GM12878 (cell line): ENCODE measurements at regions of chr4 and their contacts with region 1.

Region 1: GRCh38 chr4:153497988-153498967 is 32.1 kb downstream of the TMEM131L start:
- DNase-seq: peak; percentile 72
- ATAC-seq: peak; percentile 69
- H3K4me3 ChIP-seq: peak overlapping the region; percentile 51
- H3K27ac ChIP-seq: peak overlapping the region; percentile 58
- H3K4me1 ChIP-seq: peaks cover 53% of the 10 kb centered on the region
- H3K27me3 ChIP-seq: no peaks in the 10 kb centered on the region
- CTCF ChIP-seq: no peak
- EP300 ChIP-seq: peak; percentile 23 to 38; a peak in 1 of 4 replicates
- POLR2A ChIP-seq: no peak
- RAD21 ChIP-seq: no peak

Region 2: DNA sequence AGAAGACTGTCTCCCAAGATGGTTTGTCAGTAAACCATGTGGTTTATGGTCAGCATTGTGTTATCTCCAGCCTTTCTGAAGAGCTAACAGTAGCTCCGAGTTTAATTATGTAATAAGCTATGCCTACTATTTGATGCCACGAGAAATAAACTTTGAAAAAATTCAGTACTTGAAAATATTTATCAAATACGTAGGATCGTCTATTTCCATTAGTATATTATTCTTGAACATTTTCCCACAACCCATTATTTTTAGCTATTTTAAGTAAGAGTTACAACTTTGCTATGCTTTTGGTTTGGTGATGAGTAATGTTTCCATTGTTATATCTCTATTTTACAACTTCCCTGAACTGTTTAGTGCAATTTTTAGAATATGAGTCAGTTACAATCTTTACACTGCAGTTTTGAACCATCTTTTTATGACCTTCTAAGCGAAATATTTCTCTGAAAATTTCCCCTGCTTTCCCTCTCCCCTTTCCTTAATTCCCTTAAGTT is 338.5 kb before region 1 on chr4:
- CTCF ChIA-PET with region 1: no interaction called
- POLR2A ChIA-PET with region 1: no interaction called
- RAD21 ChIA-PET with region 1: no interaction called
- SMC1A ChIA-PET with region 1: no interaction called
- in situ Hi-C with region 1: no loop called
- intact Hi-C with region 1: no loop called
- DNase-seq: no peak
- ATAC-seq: 0 out of 3 replicates have a peak, but pooled peaks have one; percentile 23
- H3K4me3 ChIP-seq: no peak overlapping the region
- H3K27ac ChIP-seq: no peak overlapping the region
- H3K4me1 ChIP-seq: peaks cover 12% of the 10 kb centered on the region
- H3K27me3 ChIP-seq: peaks cover 0 to 3% of the 10 kb centered on the region in 2 experiments; a peak in 2 of 4 replicates
- CTCF ChIP-seq: no peak
- EP300 ChIP-seq: no peak
- POLR2A ChIP-seq: no peak
- RAD21 ChIP-seq: no peak

Region 3: DNA sequence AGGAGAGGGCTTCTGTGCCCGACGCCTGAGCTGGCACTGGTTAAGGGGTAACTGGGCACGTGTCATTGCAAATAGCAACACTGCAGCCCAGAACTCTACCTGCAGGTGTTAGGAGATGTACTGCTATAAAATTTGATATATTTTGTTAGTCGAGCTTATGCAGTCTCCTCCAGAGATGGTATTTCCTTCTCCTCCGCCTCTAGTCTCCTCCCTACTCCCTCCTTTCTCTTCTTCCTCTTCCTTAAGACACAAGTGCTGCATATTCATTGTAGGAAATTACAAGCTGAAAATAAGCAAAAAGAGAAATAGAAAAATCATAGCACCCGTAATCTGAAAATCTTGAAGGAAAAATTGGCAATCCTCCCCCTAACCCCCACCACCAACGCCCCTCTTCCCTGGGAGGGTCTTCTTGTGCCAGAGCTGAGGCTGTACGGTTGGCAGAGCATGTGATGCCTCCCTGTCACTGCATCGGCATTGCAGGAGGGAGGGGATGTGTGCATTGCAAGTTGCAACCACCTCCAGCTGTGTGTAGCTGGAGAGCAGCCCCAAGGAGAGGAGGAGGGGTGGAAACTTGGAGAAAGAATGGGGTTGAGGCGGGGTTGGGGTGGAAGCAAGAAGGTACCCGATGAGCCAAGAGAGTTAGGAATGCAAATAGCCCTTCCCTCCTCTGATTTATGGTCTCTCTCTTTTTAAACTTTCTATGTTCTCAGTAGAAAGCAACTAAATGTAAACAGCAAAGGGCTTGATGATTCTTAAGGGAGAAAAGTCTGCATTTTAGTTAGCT is 202.0 kb before region 1 on chr4:
- CTCF ChIA-PET with region 1: no interaction called
- POLR2A ChIA-PET with region 1: no interaction called
- RAD21 ChIA-PET with region 1: no interaction called
- SMC1A ChIA-PET with region 1: no interaction called
- in situ Hi-C with region 1: no loop called
- intact Hi-C with region 1: no loop called
- DNase-seq: no peak
- ATAC-seq: no peak
- H3K4me3 ChIP-seq: no peak overlapping the region
- H3K27ac ChIP-seq: no peak overlapping the region
- H3K4me1 ChIP-seq: no peaks in the 10 kb centered on the region
- H3K27me3 ChIP-seq: no peaks in the 10 kb centered on the region
- CTCF ChIP-seq: no peak
- EP300 ChIP-seq: no peak
- POLR2A ChIP-seq: no peak
- RAD21 ChIP-seq: no peak

Region 4: DNA sequence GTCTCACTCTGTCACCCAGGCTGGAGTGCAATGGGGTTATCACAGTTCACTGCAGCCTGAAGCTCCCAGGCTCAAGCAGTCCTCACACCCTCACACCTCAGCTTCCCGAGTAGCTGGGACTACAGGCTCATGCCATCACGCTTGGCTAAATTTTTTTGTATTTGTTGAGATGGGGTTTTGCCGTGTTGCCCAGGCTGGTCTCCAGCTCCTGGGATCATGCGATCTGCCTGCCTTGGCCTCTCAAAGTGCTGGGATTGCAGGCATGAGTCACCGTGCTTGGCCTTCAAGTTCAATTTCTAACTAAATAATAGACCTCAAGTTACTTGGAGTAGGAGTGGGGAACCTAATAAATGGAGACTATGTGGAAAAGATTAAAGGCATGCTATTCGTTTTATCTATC is 104.9 kb before region 1 on chr4:
- CTCF ChIA-PET with region 1: no interaction called
- POLR2A ChIA-PET with region 1: no interaction called
- RAD21 ChIA-PET with region 1: no interaction called
- SMC1A ChIA-PET with region 1: no interaction called
- in situ Hi-C with region 1: no loop called
- intact Hi-C with region 1: no loop called
- DNase-seq: no peak
- ATAC-seq: no peak
- H3K4me3 ChIP-seq: no peak overlapping the region
- H3K27ac ChIP-seq: no peak overlapping the region
- H3K4me1 ChIP-seq: no peaks in the 10 kb centered on the region
- H3K27me3 ChIP-seq: no peaks in the 10 kb centered on the region
- CTCF ChIP-seq: no peak
- EP300 ChIP-seq: no peak
- POLR2A ChIP-seq: no peak
- RAD21 ChIP-seq: no peak

Region 5: GRCh38 chr4:153432968-153433753 is 65.1 kb before region 1 on chr4:
- CTCF ChIA-PET with region 1: interaction called, 8 read pairs
- POLR2A ChIA-PET with region 1: interaction called, 12 read pairs
- RAD21 ChIA-PET with region 1: interaction called, 19 read pairs
- SMC1A ChIA-PET with region 1: interaction called, 17 read pairs
- in situ Hi-C with region 1: no loop called
- intact Hi-C with region 1: no loop called
- DNase-seq: peak; percentile 99
- ATAC-seq: peak; percentile 91
- H3K4me3 ChIP-seq: peak overlapping the region; percentile 56
- H3K27ac ChIP-seq: peak overlapping the region; percentile 84
- H3K4me1 ChIP-seq: peaks cover 31% of the 10 kb centered on the region
- H3K27me3 ChIP-seq: no peaks in the 10 kb centered on the region
- CTCF ChIP-seq: peak; percentile 86 to 96 (median 93)
- EP300 ChIP-seq: peak; percentile 78
- POLR2A ChIP-seq: peak; percentile 57
- RAD21 ChIP-seq: peak; percentile 99

Region 6: DNA sequence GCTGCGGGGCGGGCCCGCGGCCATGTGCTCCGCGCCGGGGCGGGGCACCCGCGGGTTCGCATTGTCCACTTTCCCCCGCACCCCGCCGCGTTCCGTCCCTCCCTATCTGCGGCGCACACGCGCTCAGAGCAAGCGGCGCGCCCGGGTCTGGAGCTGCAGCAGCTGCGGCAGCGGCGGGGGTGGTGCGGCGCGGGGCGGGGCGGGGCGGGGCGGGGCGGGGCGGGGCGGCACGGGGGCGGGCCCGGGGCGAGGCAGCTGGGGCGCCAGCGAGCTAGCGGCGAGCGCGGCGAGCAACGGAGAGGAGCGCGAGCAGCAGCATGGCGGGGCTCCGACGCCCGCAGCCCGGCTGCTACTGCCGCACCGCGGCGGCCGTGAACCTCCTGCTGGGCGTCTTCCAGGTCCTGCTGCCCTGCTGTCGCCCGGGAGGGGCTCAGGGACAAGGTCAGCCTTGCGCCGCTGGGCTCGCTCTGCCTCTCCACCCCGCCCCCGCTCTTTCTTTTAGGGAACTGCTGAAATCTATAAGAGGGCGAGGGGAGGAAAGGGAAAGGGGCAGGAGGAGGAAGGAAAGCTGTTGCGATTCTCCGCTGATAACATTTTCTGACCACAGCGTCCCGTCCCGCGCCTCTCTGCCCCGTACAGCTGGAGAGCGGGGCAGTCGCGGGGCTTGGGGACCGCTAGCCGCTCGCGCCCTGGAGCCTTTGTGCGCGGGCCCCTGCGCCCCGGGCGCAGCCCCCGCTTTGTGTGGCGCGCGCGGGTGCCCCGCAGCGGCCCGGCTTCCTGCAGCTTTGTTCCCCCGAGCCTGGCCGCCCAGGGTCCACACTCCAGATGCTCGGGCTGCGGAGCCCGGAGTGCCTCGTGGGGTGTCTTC is 32.0 kb before region 1 on chr4 and contains the start of gene TMEM131L:
- CTCF ChIA-PET with region 1: interaction called, 15 read pairs
- POLR2A ChIA-PET with region 1: interaction called, 268 read pairs
- RAD21 ChIA-PET with region 1: interaction called, 429 read pairs
- SMC1A ChIA-PET with region 1: interaction called, 356 read pairs
- in situ Hi-C with region 1: no loop called
- intact Hi-C with region 1: no loop called
- DNase-seq: no peak
- ATAC-seq: peak; percentile 62
- H3K4me3 ChIP-seq: peak within 1 kb of the TSS; percentile 98
- H3K27ac ChIP-seq: peak within 1 kb of the TSS; percentile 88
- H3K4me1 ChIP-seq: peaks cover 18% of the 10 kb centered on the region
- H3K27me3 ChIP-seq: no peaks in the 10 kb centered on the region
- CTCF ChIP-seq: peak in 2 of 3 experiments; percentile 35 to 40; a peak in 3 of 6 replicates
- EP300 ChIP-seq: no peak; a peak in 1 of 4 replicates
- POLR2A ChIP-seq: peak; percentile 93
- RAD21 ChIP-seq: no peak; the same call in 1 of the 2 replicates
- polyA plus RNA-seq, gene TMEM131L: 8.5 to 9.5 TPM

Region 7: GRCh38 chr4:153514001-153514526 is 15.8 kb after region 1 on chr4:
- CTCF ChIA-PET with region 1: interaction called, 4 read pairs
- POLR2A ChIA-PET with region 1: interaction called, 322 read pairs
- RAD21 ChIA-PET with region 1: interaction called, 197 read pairs
- SMC1A ChIA-PET with region 1: interaction called, 177 read pairs
- in situ Hi-C with region 1: no loop called
- intact Hi-C with region 1: no loop called
- DNase-seq: no peak
- ATAC-seq: peak; percentile 40
- H3K4me3 ChIP-seq: no peak overlapping the region
- H3K27ac ChIP-seq: peak overlapping the region; percentile 15; the same call in 1 of the 2 replicates
- H3K4me1 ChIP-seq: peaks cover 30% of the 10 kb centered on the region
- H3K27me3 ChIP-seq: no peaks in the 10 kb centered on the region
- CTCF ChIP-seq: no peak
- EP300 ChIP-seq: no peak
- POLR2A ChIP-seq: no peak
- RAD21 ChIP-seq: no peak

Region 8: GRCh38 chr4:153528705-153529485 is 30.6 kb after region 1 on chr4:
- CTCF ChIA-PET with region 1: interaction called, 4 read pairs
- POLR2A ChIA-PET with region 1: interaction called, 322 read pairs
- RAD21 ChIA-PET with region 1: interaction called, 197 read pairs
- SMC1A ChIA-PET with region 1: interaction called, 177 read pairs
- in situ Hi-C with region 1: no loop called
- intact Hi-C with region 1: no loop called
- DNase-seq: no peak
- ATAC-seq: peak; percentile 73
- H3K4me3 ChIP-seq: peak overlapping the region; percentile 58
- H3K27ac ChIP-seq: peak overlapping the region; percentile 77
- H3K4me1 ChIP-seq: peaks cover 77% of the 10 kb centered on the region
- H3K27me3 ChIP-seq: no peaks in the 10 kb centered on the region
- CTCF ChIP-seq: no peak
- EP300 ChIP-seq: no peak
- POLR2A ChIP-seq: no peak
- RAD21 ChIP-seq: no peak

Region 9: DNA sequence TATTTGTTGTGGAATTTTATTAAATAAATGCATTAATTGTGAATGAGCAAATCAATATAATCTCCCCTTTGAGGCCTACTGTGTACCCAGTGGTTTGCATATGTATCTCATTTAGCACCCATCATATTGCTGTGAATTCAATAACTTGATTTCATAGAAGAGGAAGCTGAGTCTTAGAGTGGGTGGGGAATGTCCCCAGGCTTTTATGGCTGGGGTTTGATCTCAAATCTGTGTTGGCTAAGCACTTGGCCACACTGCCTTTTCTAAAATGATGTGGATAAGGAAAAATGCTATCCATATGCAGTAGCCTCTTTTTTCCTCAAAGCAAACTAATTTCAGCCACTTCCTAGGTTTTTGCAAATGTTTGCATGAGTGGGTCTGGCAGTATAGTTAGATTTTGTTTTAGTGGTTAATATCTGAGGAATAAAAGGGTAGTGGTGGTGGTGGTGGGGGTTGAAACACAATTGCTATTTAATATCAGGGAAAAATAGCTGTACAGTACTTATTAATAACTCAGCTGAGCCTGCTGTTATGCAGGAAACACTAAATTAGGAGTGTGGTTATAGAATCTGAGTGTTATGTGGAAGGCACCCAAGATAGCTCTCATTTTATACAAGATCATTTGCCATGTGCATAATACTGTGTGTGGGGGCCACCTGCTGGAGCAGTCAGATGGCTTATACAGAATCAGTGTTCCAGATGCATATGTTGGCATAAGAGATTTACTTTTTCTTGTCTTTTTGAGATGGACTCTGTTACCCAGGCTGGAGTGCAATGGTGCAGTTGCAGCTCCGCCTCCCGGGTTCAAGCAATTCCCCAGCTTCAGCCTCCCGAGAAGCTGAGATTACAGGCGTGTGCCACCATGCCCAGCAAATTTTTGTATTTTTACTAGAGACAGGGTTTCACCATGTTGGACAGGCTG is 75.9 kb after region 1 on chr4:
- CTCF ChIA-PET with region 1: interaction called, 7 read pairs
- POLR2A ChIA-PET with region 1: interaction called, 15 read pairs
- RAD21 ChIA-PET with region 1: interaction called, 10 read pairs
- SMC1A ChIA-PET with region 1: interaction called, 7 read pairs
- in situ Hi-C with region 1: no loop called
- intact Hi-C with region 1: loop called (anchors 2 kb)
- DNase-seq: no peak
- ATAC-seq: peak; percentile 60
- H3K4me3 ChIP-seq: no peak overlapping the region
- H3K27ac ChIP-seq: peak overlapping the region; percentile 48
- H3K4me1 ChIP-seq: peaks cover 50% of the 10 kb centered on the region
- H3K27me3 ChIP-seq: no peaks in the 10 kb centered on the region
- CTCF ChIP-seq: peak; percentile 41 to 65 (median 53)
- EP300 ChIP-seq: no peak
- POLR2A ChIP-seq: no peak
- RAD21 ChIP-seq: peak; percentile 81